Aorta (tissue), 5 donors: ENCODE measurements at regions of chr11 and their contacts with region 1.

Region 1: DNA sequence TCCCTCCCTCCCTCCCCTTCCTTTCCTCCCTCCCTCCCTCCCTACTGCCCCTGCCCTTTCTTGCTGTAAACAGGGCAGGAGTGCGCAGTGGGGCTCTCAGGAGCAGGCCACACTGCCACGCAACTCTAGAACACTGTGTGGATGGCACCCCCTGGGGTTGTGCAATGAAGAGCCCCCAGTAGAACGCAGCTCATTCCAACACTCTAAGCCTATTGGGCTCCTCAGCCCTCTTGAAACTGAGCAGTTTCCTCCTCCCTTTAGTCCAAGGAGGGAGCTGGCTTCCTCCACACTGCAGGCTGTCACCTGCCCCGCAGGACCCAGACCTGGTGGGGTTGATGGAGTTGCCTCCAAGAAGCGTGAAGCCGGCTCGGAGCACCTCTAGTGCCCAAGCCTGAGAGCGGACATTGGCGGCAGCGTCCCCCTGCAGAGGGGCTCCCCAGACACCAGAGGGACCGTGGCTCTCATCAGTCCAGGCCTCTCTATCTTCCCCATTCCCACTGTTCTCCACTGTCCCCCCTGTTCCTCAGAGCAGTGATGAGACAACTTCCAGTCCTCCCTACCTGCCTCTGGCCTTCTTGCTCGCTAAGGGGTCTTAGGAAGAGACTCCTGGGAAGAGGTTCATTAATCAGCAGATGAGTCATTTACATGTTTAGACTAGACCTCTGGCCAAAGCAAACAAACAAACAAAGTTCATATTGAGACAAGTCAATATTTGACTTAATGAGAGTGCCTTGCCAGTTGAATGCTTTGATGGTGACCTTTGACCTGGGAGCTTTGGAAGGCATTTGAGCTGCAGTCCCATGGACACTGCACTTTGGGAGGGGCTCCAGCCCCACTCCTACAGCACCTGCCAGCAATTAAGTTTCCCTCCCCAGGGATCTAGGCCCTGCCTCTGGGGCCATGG is 64.0 kb downstream of the RPUSD4 start:
- DNase-seq: peak in 1 of 2 donors; percentile 36
- ATAC-seq: no peak
- H3K4me3 ChIP-seq: no peak overlapping the region
- H3K27ac ChIP-seq: no peak overlapping the region
- H3K4me1 ChIP-seq: no peaks in the 10 kb centered on the region
- H3K27me3 ChIP-seq: no peaks in the 10 kb centered on the region

Region 2: GRCh38 chr11:126122863-126123262 is 24.6 kb before region 1 on chr11:
- intact Hi-C with region 1: loop called in 1 of 2 experiments (anchors 1 kb)
- DNase-seq: peak in 1 of 2 donors; percentile 7
- ATAC-seq: peak; percentile 63
- H3K4me3 ChIP-seq: no peak overlapping the region
- H3K27ac ChIP-seq: no peak overlapping the region
- H3K4me1 ChIP-seq: no peaks in the 10 kb centered on the region
- H3K27me3 ChIP-seq: no peaks in the 10 kb centered on the region

Region 3: DNA sequence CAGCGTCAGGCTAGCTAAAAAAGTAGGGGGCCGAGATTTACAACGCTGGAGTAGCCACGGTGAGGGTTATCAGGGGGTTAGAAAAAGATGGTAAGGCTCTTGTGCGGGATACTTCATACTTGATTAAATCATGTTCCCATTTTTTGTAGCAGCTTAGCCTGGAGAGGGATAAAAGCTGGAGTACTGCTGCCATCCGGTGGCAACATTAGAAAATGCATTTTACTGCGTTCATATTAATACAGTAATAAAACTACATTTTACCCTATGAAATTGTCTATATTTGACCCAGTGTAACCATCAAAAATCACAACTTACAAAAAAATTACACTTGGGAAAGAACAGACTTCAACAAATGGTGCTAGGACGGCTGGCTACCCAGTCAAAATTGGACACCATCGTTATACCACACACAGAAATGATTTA is 46.7 kb after region 1 on chr11:
- intact Hi-C with region 1: no loop called
- DNase-seq: no peak
- ATAC-seq: peak; percentile 61
- H3K4me3 ChIP-seq: no peak overlapping the region
- H3K27ac ChIP-seq: no peak overlapping the region
- H3K4me1 ChIP-seq: no peaks in the 10 kb centered on the region
- H3K27me3 ChIP-seq: no peaks in the 10 kb centered on the region

Region 4: GRCh38 chr11:126938717-126939116 is 791.3 kb after region 1 on chr11:
- intact Hi-C with region 1: no loop called
- DNase-seq: no peak
- ATAC-seq: no peak
- H3K4me3 ChIP-seq: no peak overlapping the region
- H3K27ac ChIP-seq: no peak overlapping the region
- H3K4me1 ChIP-seq: no peaks in the 10 kb centered on the region
- H3K27me3 ChIP-seq: no peaks in the 10 kb centered on the region